ENCODE measurements at regions of chr15 and their contacts with region 1.

Region 1: DNA sequence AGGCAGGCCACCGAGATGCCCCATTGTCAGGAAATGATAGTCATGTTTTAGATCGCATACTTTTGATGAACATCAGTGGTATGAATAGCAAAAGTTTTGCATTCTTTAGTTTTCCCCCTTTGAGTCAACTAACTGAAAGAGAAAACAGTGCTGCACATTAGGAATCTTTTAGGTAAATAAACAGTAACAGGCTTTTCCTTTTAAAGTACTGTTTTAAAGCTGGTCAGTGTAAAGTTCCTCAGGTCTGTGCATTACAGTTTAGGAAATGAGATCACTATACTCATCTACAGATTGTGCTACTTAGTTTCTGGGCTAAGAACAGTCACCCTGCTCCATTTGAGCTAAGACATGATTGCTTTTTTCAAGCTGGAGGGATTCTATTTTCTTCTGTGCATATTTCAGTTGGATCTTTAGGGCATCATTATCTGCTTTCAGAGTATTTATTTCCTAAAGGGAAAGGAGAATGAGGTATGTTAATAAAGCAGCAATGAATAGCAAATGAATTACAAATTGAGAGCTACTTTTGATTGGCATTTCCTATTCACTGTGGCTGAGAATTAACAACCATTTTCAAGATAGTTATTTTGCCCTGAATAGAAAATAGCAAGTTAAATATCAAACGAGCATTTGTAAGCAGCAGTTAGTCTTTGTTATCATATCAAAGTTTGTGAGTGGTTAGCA is 36.5 kb downstream of the FAM98B start:
- DNase-seq: no peak

Region 2: GRCh38 chr15:37758412-37758811 is 732.0 kb before region 1 on chr15:
- intact Hi-C with region 1: loop called in 1 of 2 experiments (anchors 10 kb)
- DNase-seq: no peak

Region 3: GRCh38 chr15:38563723-38564519 is 73.5 kb after region 1 on chr15:
- intact Hi-C with region 1: no loop called
- DNase-seq: peak; percentile 91

Region 4: DNA sequence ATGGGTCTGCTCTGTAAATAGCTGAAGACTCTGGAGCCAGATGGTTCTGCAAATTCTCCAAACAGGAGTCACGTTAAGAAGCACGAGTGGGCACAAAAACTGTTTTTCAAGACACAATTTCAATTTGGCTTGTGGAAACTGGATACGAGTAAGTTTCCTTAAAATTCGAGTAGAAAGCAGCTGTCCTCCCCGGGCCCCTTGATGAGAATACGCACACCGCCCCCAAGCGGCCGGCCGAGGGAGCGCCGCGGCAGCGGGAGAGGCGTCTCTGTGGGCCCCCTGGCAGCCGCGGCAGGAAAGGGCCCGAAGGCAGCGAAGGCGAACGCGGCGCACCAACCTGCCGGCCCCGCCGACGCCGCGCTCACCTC is 1089.7 kb after region 1 on chr15:
- intact Hi-C with region 1: no loop called
- DNase-seq: peak; percentile 98